Heart right ventricle (tissue), 16 donors: ENCODE measurements at regions of chr12 and their contacts with region 1.

Region 1: DNA sequence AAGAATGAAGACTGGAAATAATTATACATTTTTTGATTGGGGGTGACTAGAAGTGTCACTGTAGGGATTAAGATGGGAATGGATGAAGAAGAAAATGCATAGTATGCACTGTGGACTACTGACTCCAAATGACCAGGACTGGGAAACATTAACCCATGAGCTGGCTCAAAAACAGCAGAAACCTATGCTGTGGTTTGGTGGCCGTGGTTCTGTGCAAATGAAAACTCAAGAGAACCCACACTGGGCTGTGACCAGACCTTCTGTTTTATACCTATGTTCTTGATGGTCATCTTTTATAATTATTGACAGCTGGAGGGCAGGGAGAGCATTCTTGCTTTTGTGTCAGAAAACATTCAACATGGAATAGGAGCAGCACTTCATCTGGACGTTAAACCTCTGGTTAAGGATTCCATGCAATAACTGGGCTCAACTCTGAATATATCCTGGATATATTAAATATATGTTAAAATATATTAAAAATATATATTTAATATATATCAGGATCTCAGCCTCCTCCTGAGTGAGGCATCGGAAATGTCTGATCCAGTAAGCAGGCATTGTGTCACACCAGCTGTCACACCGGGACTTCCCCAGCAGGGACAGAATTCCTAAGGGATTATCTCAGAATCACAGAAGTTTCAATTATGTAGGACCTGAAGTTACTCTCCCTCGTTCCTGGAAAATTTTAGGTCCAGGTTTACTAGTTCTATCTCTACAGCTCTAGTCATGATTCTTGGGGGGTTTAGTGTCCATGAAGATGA is 48.5 kb downstream of the BBS10 start:
- DNase-seq: no peak
- ATAC-seq: no peak
- H3K4me3 ChIP-seq: no peak overlapping the region
- H3K27ac ChIP-seq: no peak overlapping the region
- H3K4me1 ChIP-seq: no peaks in the 10 kb centered on the region
- H3K27me3 ChIP-seq: no peaks in the 10 kb centered on the region
- CTCF ChIP-seq: no peak

Region 2: GRCh38 chr12:76398106-76398505 is 98.4 kb after region 1 on chr12:
- intact Hi-C with region 1: loop called in 1 of 10 experiments (anchors 5 kb)
- DNase-seq: no peak
- ATAC-seq: no peak
- H3K4me3 ChIP-seq: no peak overlapping the region
- H3K27ac ChIP-seq: no peak overlapping the region
- H3K4me1 ChIP-seq: no peaks in the 10 kb centered on the region
- H3K27me3 ChIP-seq: no peaks in the 10 kb centered on the region
- CTCF ChIP-seq: no peak